Dorsolateral prefrontal cortex (tissue), 120 donors: ENCODE measurements at regions of chr4 and their contacts with region 1.

Region 1: DNA sequence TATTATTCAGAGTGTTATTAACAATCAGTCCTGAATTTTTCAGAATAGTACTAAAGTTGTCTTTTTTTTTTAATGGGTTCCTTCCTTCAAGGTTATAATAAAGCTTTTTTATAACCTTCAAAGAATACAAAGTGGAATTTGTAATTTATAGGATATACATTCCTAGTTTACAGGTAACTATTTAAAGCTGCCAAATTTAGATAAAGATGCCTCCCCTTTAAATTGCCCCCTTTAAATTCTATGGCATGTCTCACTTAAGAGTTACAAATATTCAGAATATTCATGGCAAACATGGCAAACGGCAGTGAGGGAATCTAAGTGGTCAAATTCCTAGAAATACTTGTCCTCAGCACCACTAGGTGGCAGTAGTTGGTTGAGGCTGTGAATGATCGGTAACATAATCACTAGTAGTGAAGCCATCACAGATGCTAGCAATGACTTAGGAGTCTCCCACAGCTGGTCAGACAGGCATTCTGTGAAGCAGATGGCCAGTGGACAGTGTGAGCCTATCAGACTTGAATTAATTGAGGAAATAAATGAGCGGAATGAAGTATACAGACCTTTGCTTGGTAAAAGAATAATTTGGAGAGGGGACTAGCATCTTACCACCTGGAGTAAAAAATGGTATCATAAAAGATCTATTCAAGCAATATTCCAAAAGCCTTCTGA is 86.4 kb downstream of the CBR4 start:
- DNase-seq: peak in 5 of 10 donors; percentile 49 to 67 (median 56)
- H3K4me3 ChIP-seq: peak overlapping the region in 1 of 59 donors; percentile 9
- H3K27ac ChIP-seq: peak overlapping the region in 1 of 59 donors; percentile 14
- H3K27me3 ChIP-seq: no peaks in the 10 kb centered on the region
- CTCF ChIP-seq: peak; percentile 56 to 92 (median 82)

Region 2: GRCh38 chr4:168183717-168184608 is 739.7 kb before region 1 on chr4:
- intact Hi-C with region 1: loop called in 1 of 2 experiments (anchors 5 kb)
- DNase-seq: no peak
- H3K4me3 ChIP-seq: no peak overlapping the region
- H3K27ac ChIP-seq: no peak overlapping the region
- H3K27me3 ChIP-seq: no peaks in the 10 kb centered on the region
- CTCF ChIP-seq: peak; percentile 35 to 78 (median 60)

Region 3: DNA sequence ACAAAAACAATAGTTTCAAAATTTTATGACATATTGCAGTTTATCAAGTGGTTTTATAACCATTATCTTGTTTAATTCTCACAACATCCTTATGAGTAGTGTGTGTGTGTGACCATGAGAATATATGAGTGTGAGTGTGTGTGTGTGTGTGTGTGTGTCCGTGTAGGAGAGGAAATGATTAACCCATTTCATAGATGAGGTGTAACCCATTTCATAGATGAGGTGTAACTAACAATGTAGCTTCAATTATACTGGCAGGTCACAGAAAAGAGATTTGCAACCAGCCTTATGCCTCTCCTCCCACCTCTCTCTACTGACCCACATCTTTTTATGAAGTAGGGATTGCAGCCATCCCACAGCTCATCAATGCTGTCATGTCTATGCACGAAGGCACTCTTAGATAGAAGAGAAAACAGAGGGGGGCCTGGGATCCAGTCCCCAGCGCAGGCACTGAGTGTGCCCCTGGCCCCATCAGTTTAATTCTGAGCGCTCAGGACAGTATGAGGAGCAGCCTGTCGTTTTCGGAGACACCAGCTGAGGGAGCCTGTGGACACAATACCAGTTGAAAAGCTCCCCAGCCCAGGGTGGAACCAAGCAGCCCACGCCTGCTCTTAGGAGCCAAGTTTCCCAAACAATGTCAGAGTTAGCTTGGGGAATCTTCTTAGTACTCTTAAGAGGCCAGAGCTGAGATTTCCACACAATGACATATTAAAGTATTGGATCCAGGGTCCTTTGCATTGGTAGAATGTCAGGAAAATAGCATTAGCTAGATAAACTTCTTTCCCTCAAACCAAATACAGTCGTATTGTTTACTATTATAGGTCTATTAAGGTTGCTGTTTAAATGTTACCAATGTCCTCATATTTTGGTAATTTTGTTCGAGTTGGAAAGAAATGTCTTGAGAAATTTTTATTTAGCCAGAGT is 338.2 kb before region 1 on chr4:
- intact Hi-C with region 1: loop called in 1 of 2 experiments (anchors 10 kb)
- DNase-seq: peak in 9 of 10 donors; percentile 18 to 61 (median 46)
- H3K4me3 ChIP-seq: no peak overlapping the region
- H3K27ac ChIP-seq: no peak overlapping the region
- H3K27me3 ChIP-seq: peaks cover 0 to 10% (median 0%) of the 10 kb centered on the region in 45 donors
- CTCF ChIP-seq: peak in 52 of 56 donors; percentile 23 to 69 (median 46)

Region 4: DNA sequence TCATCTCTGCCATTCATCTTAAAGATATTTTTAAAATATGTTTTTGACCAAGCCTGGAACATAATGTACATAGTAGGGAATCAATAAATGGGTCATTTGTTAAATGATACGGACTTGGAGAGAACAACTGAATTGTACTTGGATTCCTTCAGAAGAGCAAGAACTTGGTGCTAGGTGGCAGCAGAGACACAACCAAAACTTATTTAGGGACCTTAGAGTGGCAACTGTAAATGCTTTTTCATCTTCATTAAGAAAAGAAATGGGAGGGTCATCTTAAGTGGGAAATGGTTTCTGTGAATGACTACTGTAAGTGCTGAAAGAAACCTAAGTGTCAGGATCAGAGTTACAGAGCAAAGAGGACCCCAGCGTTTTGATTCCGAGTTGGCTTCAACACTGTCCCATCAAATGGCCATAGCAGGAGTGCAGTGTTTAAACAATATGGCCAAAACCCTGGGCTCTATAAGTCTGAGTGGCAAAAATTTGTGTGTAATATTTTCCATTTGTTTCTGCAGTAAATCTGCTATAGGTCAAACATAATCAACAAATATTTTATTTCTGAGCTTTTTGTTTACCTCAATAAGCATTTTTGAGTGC is 213.2 kb before region 1 on chr4:
- intact Hi-C with region 1: loop called in 1 of 2 experiments (anchors 5 kb)
- DNase-seq: peak in 1 of 10 donors; percentile 44
- H3K4me3 ChIP-seq: no peak overlapping the region
- H3K27ac ChIP-seq: no peak overlapping the region
- H3K27me3 ChIP-seq: no peaks in the 10 kb centered on the region
- CTCF ChIP-seq: peak in 54 of 56 donors; percentile 18 to 75 (median 52)

Region 5: DNA sequence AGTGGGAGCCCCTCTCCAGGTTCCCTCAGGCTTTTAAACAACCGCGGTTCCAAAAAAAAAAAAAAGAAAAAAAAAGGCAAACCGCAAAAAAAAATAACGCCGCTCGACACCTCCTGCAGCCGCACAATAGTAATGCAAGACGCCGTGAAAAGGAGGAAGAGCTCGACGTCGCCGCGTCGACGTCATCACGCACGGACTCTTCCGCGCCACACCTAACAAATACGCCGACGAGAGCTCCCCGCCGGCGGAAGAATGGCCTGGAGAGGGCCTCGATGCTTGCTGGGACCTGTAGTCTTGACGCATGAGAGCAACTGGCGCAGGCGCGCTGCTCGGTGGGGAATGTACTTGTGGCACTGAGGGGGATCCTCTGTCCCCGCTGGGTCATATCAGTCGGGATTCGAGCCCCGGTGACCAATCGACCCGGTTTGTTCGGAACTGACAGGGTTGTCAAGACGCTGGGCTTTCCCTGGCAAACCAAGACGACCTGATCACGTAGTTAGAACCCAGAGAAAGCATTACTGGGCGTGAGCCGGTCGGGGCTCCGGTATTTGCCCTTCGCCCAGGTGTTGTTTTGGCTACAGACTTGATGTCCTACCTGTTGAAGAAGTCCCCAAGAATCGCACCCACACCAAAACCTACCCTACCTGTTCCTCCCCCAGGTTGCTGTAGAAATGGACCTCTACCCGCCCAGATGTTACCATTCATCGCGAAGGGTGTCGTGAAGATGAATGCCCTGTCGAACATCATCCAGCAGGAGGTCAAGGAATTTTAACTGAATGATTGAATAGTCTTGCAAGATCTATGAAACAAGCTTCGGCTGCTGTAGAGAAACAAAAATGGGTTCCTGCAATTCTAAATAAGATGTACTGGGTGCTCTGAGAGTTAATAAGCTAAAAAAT is 86.7 kb after region 1 on chr4 and contains the start of gene CBR4:
- intact Hi-C with region 1: loop called in 1 of 2 experiments (anchors 5 kb)
- DNase-seq: peak; percentile 98 to 99 (median 99)
- H3K4me3 ChIP-seq: peak within 1 kb of the TSS; percentile 62 to 95 (median 83)
- H3K27ac ChIP-seq: peak within 1 kb of the TSS; percentile 46 to 98 (median 91)
- H3K27me3 ChIP-seq: no peaks in the 10 kb centered on the region
- CTCF ChIP-seq: peak in 41 of 56 donors; percentile 15 to 67 (median 40)
- total RNA-seq, gene CBR4: 23.5 to 42.3 (median 31.8) TPM

Region 6: DNA sequence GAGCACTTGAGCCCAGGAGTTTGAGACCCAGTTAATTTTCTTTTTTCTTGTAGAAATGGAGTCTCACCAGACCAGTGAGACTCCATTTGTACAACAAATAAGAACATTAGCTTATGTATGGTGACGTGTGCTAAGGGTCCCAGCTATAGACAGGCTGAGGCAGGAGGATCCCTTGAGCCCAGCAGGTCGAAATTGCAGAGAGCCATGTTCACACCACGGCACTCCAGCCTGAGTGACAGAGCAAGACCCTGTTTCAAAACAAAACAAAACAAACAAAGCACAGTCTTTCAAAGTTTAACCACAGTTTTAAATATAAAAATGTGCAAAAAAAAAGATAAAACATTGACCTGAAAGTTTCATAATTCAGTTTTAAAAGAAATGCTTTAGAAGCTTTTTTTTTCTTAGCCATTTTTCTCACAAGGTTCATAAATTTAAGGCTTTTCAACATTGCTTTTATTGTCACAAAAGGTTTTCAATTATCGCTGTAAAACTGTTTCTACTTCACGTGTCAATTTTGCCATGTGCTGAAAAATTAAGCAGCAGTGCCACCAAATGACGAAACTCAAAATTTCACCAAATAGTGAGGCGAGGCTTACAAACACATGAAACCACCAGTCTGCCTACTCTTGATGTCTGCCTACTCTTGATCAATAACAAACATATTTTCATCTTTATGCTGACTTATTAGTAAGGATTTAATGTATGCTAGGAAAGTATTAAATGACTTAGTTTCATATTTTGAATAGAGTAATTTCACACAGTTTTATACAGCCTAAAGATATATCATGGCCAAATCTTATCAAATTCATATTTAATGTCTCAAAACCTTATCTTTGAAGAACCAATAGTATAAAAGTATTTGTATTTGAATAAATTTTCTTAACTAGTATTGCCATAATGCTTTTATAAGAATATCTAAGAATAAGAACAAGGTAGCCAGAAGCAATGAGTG is 562.4 kb after region 1 on chr4:
- intact Hi-C with region 1: loop called (anchors 5 kb)
- DNase-seq: peak in 3 of 10 donors; percentile 4 to 48 (median 43)
- H3K4me3 ChIP-seq: peak overlapping the region in 13 of 59 donors; percentile 11 to 51 (median 27)
- H3K27ac ChIP-seq: peak overlapping the region in 9 of 59 donors; percentile 0 to 58 (median 14)
- H3K27me3 ChIP-seq: no peaks in the 10 kb centered on the region
- CTCF ChIP-seq: peak in 55 of 56 donors; percentile 13 to 89 (median 71)

Region 7: GRCh38 chr4:169566021-169566818 is 642.6 kb after region 1 on chr4:
- intact Hi-C with region 1: loop called (anchors 2 to 5 kb)
- DNase-seq: peak in 1 of 10 donors; percentile 42
- H3K4me3 ChIP-seq: no peak overlapping the region
- H3K27ac ChIP-seq: peak overlapping the region in 1 of 59 donors; percentile 3
- H3K27me3 ChIP-seq: no peaks in the 10 kb centered on the region
- CTCF ChIP-seq: peak; percentile 42 to 94 (median 76)